CD14-positive monocyte (primary cell): ENCODE measurements at regions of chr6 and their contacts with region 1.

Region 1: GRCh38 chr6:14660806-14661579 is 543.4 kb downstream of the CD83 start:
- DNase-seq: peak; percentile 87 to 96 (median 89)
- H3K4me3 ChIP-seq: no peak overlapping the region
- H3K4me3 Mint-ChIP-seq: no peak overlapping the region
- H3K27ac ChIP-seq: peak overlapping the region; percentile 5 to 73
- H3K27ac Mint-ChIP-seq: no peak overlapping the region
- H3K4me1 ChIP-seq: peaks cover 65 to 76% of the 10 kb centered on the region in 2 donors
- H3K4me1 Mint-ChIP-seq: peaks cover 58% of the 10 kb centered on the region
- H3K27me3 ChIP-seq: no peaks in the 10 kb centered on the region
- H3K27me3 Mint-ChIP-seq: no peaks in the 10 kb centered on the region
- CTCF ChIP-seq: no peak

Region 2: DNA sequence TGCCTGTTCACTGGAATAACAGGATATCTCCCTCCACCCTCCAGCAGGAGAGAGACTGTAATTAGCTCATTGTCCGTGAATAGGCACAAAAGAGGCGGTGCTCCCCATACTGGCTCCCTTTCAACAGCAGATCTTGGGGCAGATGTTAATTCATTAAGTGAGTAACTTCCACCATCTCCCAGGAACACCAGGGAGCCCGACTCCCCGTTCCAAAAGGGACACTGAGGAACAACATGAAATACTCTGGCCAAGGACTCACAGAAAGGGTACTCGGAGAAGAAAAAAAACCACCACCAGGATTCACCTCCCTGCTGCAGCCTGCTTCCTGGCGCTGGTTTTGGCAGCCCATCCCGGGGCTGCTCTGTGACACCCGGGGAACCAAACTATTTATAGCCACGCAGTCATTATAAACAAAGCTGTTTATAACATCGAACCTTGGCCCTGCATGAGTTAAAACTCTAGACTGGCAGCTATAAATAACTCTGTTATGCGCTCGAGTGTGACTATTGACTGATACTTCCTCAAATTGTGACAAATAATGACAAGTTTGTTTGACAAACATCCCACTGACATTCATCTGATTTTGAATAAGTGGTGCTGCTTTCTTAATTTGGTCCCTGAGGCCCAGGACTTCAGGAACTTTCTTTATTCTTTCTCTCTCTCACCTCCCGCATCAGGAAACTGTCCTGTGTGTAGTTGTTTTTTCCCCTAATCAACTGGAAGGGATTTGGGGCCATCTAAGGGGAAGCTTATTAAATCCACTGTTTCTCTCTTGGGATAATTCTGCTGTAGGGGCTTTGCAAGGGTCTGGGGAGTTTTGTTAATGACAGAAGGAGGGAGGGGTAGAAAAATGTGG is 21.9 kb before region 1 on chr6:
- intact Hi-C with region 1: loop called in 1 of 2 experiments (anchors 2 kb)
- DNase-seq: peak; percentile 74 to 79 (median 75)
- H3K4me3 ChIP-seq: peak overlapping the region; percentile 35 to 69 (median 57)
- H3K4me3 Mint-ChIP-seq: peak overlapping the region; percentile 81 to 95
- H3K27ac ChIP-seq: peak overlapping the region; percentile 35 to 89
- H3K27ac Mint-ChIP-seq: peak overlapping the region; percentile 69 to 98 (median 96)
- H3K4me1 ChIP-seq: peaks cover 28 to 38% of the 10 kb centered on the region in 2 donors
- H3K4me1 Mint-ChIP-seq: peaks cover 50% of the 10 kb centered on the region
- H3K27me3 ChIP-seq: no peaks in the 10 kb centered on the region
- H3K27me3 Mint-ChIP-seq: peaks cover 0 to 9% (median 0%) of the 10 kb centered on the region in 3 donors
- CTCF ChIP-seq: no peak